IMR-90 (cell line): ENCODE measurements at regions of chr12 and their contacts with region 1.

Region 1: DNA sequence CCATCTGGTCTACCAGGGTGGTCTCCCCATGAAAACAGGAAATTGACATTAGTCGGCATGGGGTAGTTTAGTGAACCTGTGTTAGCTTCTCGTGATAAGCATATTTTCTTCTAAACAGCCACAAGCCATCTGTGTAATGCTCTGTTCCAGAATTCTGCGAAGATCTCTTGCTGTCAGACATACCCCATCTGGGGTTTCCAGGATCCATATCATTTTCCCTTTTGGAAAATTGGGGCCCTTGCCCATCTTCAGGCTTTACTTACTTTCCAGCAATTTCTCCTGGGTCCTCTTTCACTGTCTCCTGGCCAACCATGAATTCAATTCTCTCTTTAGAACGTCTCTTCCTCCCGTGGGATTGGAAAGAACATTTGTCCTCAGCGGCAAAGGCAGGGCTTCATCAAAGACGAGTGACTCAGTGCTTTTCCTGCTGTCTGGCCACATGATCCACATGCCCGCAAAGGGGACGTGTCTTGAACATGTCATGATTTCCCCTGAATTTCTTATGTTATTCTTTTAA is 21.4 kb upstream of the NCOR2 start:
- DNase-seq: peak; percentile 81
- ATAC-seq: peak; percentile 92
- H3K4me3 ChIP-seq: no peak overlapping the region
- H3K27ac ChIP-seq: peak overlapping the region; percentile 19; the same call in 1 of the 2 replicates
- H3K4me1 ChIP-seq: peaks cover 9% of the 10 kb centered on the region; the same call in 1 of the 2 replicates
- H3K27me3 ChIP-seq: peaks cover 2% of the 10 kb centered on the region; the same call in 1 of the 2 replicates
- CTCF ChIP-seq: no peak
- POLR2A ChIP-seq: no peak
- RAD21 ChIP-seq: no peak

Region 2: DNA sequence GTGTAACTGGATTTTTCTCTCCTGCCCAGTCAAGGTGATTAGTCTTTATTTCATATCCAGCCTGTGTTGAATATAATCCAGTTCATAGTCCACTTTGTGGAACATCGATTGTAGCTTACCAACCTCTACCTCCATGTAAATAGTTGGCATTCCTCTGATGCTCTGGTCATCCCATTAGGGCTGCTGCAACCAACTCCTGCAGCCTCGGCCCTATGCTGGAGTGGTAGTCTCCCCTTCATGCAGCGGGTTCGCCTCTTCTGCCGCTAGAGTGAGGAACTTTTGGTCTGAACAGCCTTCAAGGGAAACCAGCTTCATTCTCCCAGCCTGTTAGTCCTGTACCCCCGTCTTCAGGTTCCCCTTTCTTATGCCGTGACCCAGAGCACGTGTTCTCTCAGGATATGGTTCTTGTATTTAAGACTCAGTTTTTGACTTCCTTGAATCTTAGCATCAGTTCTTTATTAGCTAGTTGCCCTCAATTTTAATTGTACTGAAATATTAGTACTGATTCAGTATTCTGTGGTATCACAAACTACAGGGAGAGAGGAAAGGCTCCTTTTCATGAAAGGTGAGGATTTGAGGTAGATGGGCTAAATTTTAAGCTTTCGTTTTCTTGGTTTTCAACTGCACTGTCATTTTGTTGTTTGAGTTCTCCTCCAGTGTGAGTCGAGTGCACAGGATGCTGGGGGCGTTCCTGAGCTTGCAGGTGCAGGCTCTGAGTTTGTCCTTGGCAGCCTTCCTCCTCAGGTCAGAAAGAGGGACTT is 582.5 kb before region 1 on chr12:
- CTCF ChIA-PET with region 1: no interaction called
- POLR2A ChIA-PET with region 1: interaction called, 20 read pairs
- dilution Hi-C with region 1: no loop called
- in situ Hi-C with region 1: no loop called
- intact Hi-C with region 1: no loop called
- DNase-seq: no peak
- ATAC-seq: no peak
- H3K4me3 ChIP-seq: no peak overlapping the region
- H3K27ac ChIP-seq: no peak overlapping the region
- H3K4me1 ChIP-seq: peaks cover 24% of the 10 kb centered on the region
- H3K27me3 ChIP-seq: no peaks in the 10 kb centered on the region
- CTCF ChIP-seq: no peak
- POLR2A ChIP-seq: no peak
- RAD21 ChIP-seq: no peak

Region 3: GRCh38 chr12:124097701-124098100 is 491.1 kb before region 1 on chr12:
- CTCF ChIA-PET with region 1: no interaction called
- POLR2A ChIA-PET with region 1: no interaction called
- dilution Hi-C with region 1: no loop called
- in situ Hi-C with region 1: no loop called
- intact Hi-C with region 1: no loop called
- DNase-seq: no peak
- ATAC-seq: no peak
- H3K4me3 ChIP-seq: no peak overlapping the region
- H3K27ac ChIP-seq: no peak overlapping the region
- H3K4me1 ChIP-seq: no peaks in the 10 kb centered on the region
- H3K27me3 ChIP-seq: peaks cover 36% of the 10 kb centered on the region
- CTCF ChIP-seq: no peak
- POLR2A ChIP-seq: no peak
- RAD21 ChIP-seq: no peak

Region 4: DNA sequence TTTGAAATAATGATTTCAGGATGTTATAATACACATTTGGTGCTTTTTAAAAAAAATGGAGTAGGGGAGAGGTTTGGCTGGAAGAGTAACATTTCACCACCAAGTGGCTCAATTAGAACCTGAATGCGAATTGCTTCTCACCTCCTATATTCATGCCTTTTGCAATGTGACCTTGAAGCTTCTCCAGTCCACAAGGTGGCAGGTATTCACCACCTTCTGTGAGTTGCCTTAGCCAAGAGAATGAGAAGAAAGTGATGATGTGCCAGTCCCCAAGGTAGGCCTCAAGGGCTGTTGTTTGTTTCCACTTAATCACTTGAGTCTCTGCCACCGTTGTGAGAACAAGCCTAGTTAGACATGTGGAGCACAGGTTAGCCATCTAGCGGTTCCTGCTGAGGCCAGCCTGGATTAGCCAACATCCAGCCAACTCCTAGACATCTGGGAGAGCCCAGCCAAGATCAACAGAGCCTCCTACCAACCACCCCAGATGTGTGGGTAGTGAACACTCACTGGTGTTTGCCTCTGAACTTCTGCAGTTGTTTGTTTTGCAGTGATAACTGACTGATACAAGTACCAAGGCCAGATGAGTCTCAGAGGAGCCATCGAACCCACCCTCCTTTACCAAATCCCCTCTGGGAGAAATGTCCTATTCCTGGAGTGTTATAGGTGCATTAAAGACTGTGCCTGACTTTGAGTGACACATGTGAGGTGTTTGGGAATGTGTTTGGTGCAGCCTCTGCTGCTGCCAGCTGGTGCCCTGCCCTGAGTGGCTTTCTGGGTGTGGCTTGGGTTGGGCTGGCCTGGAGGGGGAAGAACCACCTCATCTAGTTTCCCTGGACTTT is 426.4 kb before region 1 on chr12:
- CTCF ChIA-PET with region 1: no interaction called
- POLR2A ChIA-PET with region 1: no interaction called
- dilution Hi-C with region 1: no loop called
- in situ Hi-C with region 1: no loop called
- intact Hi-C with region 1: no loop called
- DNase-seq: no peak
- ATAC-seq: no peak
- H3K4me3 ChIP-seq: no peak overlapping the region
- H3K27ac ChIP-seq: no peak overlapping the region
- H3K4me1 ChIP-seq: no peaks in the 10 kb centered on the region
- H3K27me3 ChIP-seq: peaks cover 32% of the 10 kb centered on the region
- CTCF ChIP-seq: no peak
- POLR2A ChIP-seq: no peak
- RAD21 ChIP-seq: no peak